ENCODE measurements at regions of chr7 and their contacts with region 1.

Region 1: GRCh38 chr7:33109005-33109757 is at the start of gene RP9:
- DNase-seq: peak; percentile 66 to 82 (median 78)
- H3K4me3 ChIP-seq: peak within 1 kb of the TSS; percentile 82
- H3K4me3 Mint-ChIP-seq: peak within 1 kb of the TSS; percentile 76 to 92 (median 84)
- H3K27ac ChIP-seq: peak within 1 kb of the TSS; percentile 74
- H3K27ac Mint-ChIP-seq: peak within 1 kb of the TSS; percentile 34 to 92 (median 83)
- H3K4me1 ChIP-seq: peaks cover 26% of the 10 kb centered on the region
- H3K4me1 Mint-ChIP-seq: peaks cover 32 to 55% (median 50%) of the 10 kb centered on the region in 3 donors
- H3K27me3 ChIP-seq: no peaks in the 10 kb centered on the region
- H3K27me3 Mint-ChIP-seq: peaks cover 3 to 14% of the 10 kb centered on the region in 2 donors
- total RNA-seq, gene RP9: 26.0 to 27.7 TPM

Region 2: DNA sequence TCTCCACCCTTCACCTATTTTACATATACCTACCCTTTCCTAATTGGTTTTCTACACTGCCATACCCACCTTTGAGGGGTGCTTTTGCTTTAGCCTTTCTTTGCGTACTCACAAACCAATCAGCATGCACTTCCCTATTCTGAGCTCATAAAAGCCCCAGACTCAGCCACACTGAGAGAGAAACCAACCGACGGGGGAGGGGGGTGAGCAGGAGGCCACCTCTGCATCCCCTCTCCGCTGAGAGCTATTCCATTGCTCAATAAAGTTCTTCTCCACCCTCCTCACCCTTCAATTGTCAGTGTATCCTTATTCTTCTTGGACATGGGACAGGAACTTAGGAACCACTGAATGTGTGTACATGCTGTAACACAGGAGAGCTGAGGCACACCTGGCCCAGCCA is 161.0 kb before region 1 on chr7:
- CTCF ChIA-PET with region 1: no interaction called
- POLR2A ChIA-PET with region 1: no interaction called
- DNase-seq: no peak
- H3K4me3 ChIP-seq: no peak overlapping the region
- H3K4me3 Mint-ChIP-seq: no peak overlapping the region
- H3K27ac ChIP-seq: no peak overlapping the region
- H3K27ac Mint-ChIP-seq: no peak overlapping the region
- H3K4me1 ChIP-seq: peaks cover 2% of the 10 kb centered on the region
- H3K4me1 Mint-ChIP-seq: peaks cover 0 to 2% (median 0%) of the 10 kb centered on the region in 3 donors
- H3K27me3 ChIP-seq: no peaks in the 10 kb centered on the region
- H3K27me3 Mint-ChIP-seq: peaks cover 12 to 43% of the 10 kb centered on the region in 2 donors

Region 3: DNA sequence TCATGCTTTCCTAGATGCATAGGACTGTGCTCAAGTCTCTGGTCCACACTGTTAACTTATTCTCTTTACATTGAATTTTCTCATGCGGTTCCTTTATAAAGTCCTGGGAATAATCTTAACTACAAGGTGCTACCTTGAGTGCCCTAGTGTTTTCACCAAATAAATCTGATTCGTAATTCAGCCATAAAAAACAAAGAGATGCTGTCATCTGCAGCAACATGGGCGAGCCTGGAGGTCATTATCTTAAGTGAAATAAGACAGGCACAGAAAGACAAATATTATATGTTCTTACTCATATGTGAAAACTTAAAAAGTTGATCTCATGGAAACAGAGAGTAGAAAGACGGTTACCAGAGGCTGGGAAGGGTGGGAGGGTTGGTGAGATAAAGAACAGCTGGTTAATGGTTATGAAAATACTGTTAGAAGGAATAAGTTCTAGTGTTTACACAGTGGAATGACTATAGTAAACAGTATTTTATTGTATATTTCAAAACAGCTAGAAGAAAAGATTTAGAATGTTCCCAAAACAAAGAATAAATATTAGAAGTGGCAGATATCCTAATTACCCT is 84.9 kb before region 1 on chr7:
- CTCF ChIA-PET with region 1: no interaction called
- POLR2A ChIA-PET with region 1: no interaction called
- DNase-seq: no peak
- H3K4me3 ChIP-seq: no peak overlapping the region
- H3K4me3 Mint-ChIP-seq: no peak overlapping the region
- H3K27ac ChIP-seq: no peak overlapping the region
- H3K27ac Mint-ChIP-seq: peak overlapping the region in 1 of 8 donors; percentile 2
- H3K4me1 ChIP-seq: no peaks in the 10 kb centered on the region
- H3K4me1 Mint-ChIP-seq: peaks cover 4% of the 10 kb centered on the region in 3 donors
- H3K27me3 ChIP-seq: no peaks in the 10 kb centered on the region
- H3K27me3 Mint-ChIP-seq: no peaks in the 10 kb centered on the region

Region 4: DNA sequence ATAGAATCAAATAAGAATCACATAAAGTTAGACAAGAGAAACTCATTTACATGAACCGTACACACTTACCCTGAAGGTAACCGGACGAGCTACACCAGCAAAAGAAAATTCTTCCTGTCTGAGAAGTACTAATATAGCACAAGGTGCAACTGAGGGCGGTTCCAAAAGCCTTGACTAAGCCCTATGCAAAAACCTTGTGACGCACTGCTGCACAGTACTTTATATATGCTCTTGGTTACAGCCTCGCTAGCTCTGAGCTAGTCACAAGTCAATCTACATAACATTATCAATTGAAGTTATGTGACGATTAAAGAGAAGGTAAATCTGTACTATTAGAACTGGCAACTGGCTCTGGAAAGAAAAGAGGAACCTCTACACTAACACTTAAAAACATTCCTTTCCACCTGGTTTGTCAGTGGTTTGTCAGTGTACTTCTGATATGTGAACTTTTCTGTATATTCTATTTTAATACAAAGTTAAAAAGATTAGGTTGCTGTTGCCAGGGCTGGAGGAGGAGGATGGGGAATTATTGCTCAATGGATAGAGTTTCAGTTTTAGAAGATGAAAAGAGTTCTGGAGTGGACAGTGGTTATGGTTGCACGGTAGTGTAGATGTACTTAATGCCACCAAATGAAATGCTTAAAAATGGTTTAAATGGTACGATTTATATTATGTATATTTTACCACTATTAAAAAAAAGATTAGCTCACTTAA is 68.2 kb before region 1 on chr7:
- CTCF ChIA-PET with region 1: interaction called, 16 read pairs
- POLR2A ChIA-PET with region 1: interaction called, 3 read pairs
- DNase-seq: peak; percentile 46 to 77 (median 65)
- H3K4me3 ChIP-seq: peak overlapping the region; percentile 23
- H3K4me3 Mint-ChIP-seq: peak overlapping the region; percentile 76 to 85 (median 82)
- H3K27ac ChIP-seq: peak overlapping the region; percentile 55
- H3K27ac Mint-ChIP-seq: peak overlapping the region; percentile 86 to 96 (median 94)
- H3K4me1 ChIP-seq: peaks cover 24% of the 10 kb centered on the region
- H3K4me1 Mint-ChIP-seq: peaks cover 50 to 73% (median 66%) of the 10 kb centered on the region in 3 donors
- H3K27me3 ChIP-seq: no peaks in the 10 kb centered on the region
- H3K27me3 Mint-ChIP-seq: no peaks in the 10 kb centered on the region

Region 5: DNA sequence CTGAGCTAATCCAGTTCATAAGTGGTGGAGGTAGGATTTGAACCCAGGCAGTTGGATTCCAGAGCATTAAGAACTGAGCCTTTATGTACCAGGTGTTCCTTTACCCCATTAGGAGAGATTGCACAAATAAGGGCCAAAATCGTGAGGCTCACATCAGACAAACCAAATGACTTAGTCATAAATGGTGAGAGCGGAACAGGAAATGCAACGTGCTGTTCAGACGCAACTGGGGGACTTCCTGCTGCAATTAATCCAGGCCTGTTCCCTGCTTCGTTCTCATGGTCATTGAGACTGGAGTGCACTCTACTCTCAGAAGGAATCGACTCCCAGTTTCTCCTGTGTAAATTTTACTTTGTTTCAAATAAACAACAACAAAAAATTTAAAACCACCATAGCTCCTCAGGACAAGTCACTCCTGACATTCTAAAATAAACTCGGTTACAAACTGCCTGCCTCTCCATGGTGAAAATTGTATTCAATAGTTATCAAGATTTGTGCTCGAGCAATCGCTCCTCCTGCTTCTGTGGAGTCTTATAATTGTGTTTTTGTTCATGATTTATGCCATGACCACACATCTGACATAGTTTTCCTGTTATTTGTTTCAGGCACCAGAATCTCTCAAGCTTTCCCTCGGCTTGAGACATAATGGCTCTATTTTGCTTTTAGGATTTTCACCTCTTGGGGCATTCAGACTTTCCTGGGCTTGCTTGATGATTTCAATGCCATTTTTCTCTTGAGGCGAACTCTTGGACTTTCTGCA is 680.9 kb after region 1 on chr7:
- CTCF ChIA-PET with region 1: no interaction called
- POLR2A ChIA-PET with region 1: no interaction called
- DNase-seq: no peak
- H3K4me3 ChIP-seq: no peak overlapping the region
- H3K4me3 Mint-ChIP-seq: no peak overlapping the region
- H3K27ac ChIP-seq: no peak overlapping the region
- H3K27ac Mint-ChIP-seq: no peak overlapping the region
- H3K4me1 ChIP-seq: no peaks in the 10 kb centered on the region
- H3K4me1 Mint-ChIP-seq: no peaks in the 10 kb centered on the region
- H3K27me3 ChIP-seq: no peaks in the 10 kb centered on the region
- H3K27me3 Mint-ChIP-seq: no peaks in the 10 kb centered on the region